HEK293 (cell line): ENCODE measurements at regions of chr20 and their contacts with region 1.

Region 1: GRCh38 chr20:49676581-49677291 is 36.9 kb downstream of the B4GALT5 start:
- H3K4me3 ChIP-seq: no peak overlapping the region
- H3K27ac ChIP-seq: no peak overlapping the region
- H3K4me1 ChIP-seq: peaks cover 16% of the 10 kb centered on the region
- CTCF ChIP-seq: no peak

Region 2: GRCh38 chr20:49699200-49699992 is 22.7 kb after region 1 on chr20:
- CTCF ChIA-PET with region 1: interaction called, 4 read pairs
- POLR2A ChIA-PET with region 1: interaction called, 12 read pairs
- H3K4me3 ChIP-seq: no peak overlapping the region
- H3K27ac ChIP-seq: no peak overlapping the region
- H3K4me1 ChIP-seq: peaks cover 21% of the 10 kb centered on the region
- CTCF ChIP-seq: no peak